ENCODE measurements at regions of chr16 and their contacts with region 1.

Region 1: DNA sequence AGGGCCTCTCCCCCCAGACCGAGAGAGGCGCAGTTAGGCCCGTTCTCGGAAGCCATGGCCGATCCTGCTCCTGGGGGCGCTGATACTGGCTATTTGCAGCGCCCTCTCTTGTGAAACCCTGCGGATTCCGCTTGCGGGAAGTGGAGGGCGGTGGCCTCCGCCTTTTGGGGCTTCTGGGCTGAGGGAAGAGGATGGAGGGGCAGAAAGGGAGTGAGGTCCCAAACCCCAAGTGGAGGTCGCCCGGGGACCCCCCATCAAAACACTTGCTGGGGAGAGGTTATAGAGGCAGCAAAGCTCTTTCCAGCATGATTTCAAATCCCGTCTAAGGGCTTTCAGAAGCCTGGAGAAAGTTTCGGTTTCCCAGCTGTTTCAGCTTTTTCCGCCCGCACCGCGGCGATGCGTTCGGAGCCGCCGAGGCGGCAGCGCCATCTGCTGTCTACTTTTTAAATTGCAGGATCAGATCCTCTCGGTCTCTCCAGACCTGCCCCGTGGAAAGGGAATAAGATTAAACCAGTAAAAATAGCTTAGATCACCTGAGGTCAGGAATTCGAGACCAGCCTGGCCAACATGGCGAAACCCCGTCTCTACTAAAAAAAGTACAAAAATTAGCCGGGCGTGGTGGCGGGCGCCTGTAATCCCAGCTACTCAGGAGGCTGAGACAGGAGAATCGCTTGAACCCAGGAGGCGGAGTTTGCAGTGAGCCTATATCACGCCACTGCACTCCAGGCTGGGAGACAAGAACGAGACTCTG is 15.8 kb downstream of the SNX20 start:
- DNase-seq: peak; percentile 87 to 92
- H3K4me3 ChIP-seq: peak overlapping the region; percentile 46 to 50 (median 48)
- H3K27ac ChIP-seq: peak overlapping the region in 4 of 5 donors; percentile 56 to 80 (median 77)
- H3K4me1 ChIP-seq: peaks cover 0 to 29% (median 18%) of the 10 kb centered on the region in 4 donors
- H3K27me3 ChIP-seq: no peaks in the 10 kb centered on the region
- CTCF ChIP-seq: peak in 5 of 7 experiments; percentile 49 to 93 (median 84)
- EP300 ChIP-seq: no peak
- POLR2A ChIP-seq: no peak

Region 2: GRCh38 chr16:50371936-50372595 is 293.2 kb before region 1 on chr16:
- intact Hi-C with region 1: loop called (anchors 10 kb)
- DNase-seq: peak in 1 of 2 donors; percentile 77
- H3K4me3 ChIP-seq: no peak overlapping the region
- H3K27ac ChIP-seq: peak overlapping the region in 3 of 5 donors; percentile 29 to 78 (median 54)
- H3K4me1 ChIP-seq: peaks cover 7 to 25% (median 18%) of the 10 kb centered on the region in 4 donors
- H3K27me3 ChIP-seq: no peaks in the 10 kb centered on the region
- CTCF ChIP-seq: no peak
- EP300 ChIP-seq: no peak
- POLR2A ChIP-seq: no peak

Region 3: GRCh38 chr16:50735629-50736122 is 70.4 kb after region 1 on chr16:
- intact Hi-C with region 1: no loop called
- DNase-seq: no peak
- H3K4me3 ChIP-seq: no peak overlapping the region
- H3K27ac ChIP-seq: no peak overlapping the region
- H3K4me1 ChIP-seq: peaks cover 0 to 5% (median under 1%) of the 10 kb centered on the region in 4 donors
- H3K27me3 ChIP-seq: no peaks in the 10 kb centered on the region
- CTCF ChIP-seq: no peak
- EP300 ChIP-seq: no peak
- POLR2A ChIP-seq: no peak

Region 4: GRCh38 chr16:50948268-50948930 is 283.1 kb after region 1 on chr16:
- intact Hi-C with region 1: no loop called
- DNase-seq: no peak
- H3K4me3 ChIP-seq: no peak overlapping the region
- H3K27ac ChIP-seq: no peak overlapping the region
- H3K4me1 ChIP-seq: no peaks in the 10 kb centered on the region
- H3K27me3 ChIP-seq: peaks cover 0 to 12% (median 0%) of the 10 kb centered on the region in 3 donors
- CTCF ChIP-seq: no peak
- EP300 ChIP-seq: no peak
- POLR2A ChIP-seq: no peak

Measured in stomach (tissue), 19 donors.